Dendritic cell treated with granulocyte-macrophage colony-stimulating factor and Interleukin-4, amounts not matched to agents 40 ng/mL and 50 ng/mL, for 4 days (primary cell): ENCODE measurements at regions of chr3 and their contacts with region 1.

Region 1: DNA sequence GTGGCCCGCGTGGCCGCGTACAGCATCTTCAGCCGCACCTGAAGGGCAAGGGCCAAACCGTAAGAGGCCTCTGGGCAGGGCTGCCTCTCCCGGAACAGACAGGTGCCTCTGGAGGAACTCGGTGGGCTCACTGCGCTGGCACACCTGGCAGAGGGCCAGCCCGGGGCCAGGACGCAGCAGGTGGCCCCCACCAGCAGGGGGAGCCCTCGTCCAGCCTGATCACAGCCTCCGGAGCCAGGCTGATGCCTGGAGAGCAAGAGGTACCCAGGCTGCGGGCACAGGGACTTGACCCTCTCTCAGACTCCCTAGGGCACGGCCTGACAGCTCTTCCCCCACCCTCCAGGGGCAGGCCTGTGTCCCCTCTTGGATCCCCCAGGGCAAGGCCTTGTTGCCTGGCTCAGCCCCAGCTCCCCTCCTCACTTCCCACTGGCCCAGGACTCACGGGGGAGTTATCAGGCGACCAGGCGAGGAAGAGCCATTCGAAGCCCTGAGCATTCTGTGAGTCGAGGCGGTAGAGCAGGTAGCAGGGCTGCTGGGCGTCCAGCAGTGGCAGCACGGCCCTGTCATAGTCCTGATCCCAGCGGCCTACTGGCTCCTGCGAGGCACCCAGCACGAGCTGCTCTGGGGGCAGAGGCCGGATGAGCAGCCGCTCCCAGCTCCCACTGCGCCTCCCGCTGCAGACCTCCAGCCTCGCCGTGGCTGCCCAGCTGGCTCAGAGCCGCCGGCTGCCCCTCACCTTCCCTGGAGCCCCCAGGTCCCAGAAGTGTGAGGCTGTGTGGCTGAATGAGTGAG is 6.3 kb upstream of the TLR9 start:
- H3K4me3 Mint-ChIP-seq: no peak overlapping the region
- H3K27ac Mint-ChIP-seq: peak overlapping the region; percentile 3
- H3K4me1 Mint-ChIP-seq: peaks cover 73% of the 10 kb centered on the region
- H3K27me3 Mint-ChIP-seq: no peaks in the 10 kb centered on the region

Region 2: DNA sequence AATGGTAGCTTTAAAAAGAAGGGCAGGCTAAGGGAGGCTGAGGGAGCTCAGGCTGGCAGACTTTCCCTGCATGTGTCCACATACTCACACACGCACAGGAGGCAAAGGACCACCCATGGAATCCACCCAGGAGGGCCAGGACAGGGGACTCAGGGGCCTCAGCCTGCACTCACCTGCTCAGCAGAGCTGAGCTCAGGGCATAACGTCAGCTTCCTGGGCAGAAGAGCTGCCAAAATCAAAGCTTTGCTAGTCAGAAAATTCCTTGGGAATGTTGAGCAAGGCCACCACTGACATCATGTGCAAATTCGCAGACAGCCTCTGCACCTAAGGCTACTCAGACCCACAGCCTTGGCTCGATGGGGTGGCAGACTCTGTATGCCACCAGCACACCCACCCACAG is 50.2 kb before region 1 on chr3:
- intact Hi-C with region 1: no loop called
- H3K4me3 Mint-ChIP-seq: no peak overlapping the region
- H3K27ac Mint-ChIP-seq: no peak overlapping the region
- H3K4me1 Mint-ChIP-seq: peaks cover 54% of the 10 kb centered on the region
- H3K27me3 Mint-ChIP-seq: peaks cover 3% of the 10 kb centered on the region

Region 3: DNA sequence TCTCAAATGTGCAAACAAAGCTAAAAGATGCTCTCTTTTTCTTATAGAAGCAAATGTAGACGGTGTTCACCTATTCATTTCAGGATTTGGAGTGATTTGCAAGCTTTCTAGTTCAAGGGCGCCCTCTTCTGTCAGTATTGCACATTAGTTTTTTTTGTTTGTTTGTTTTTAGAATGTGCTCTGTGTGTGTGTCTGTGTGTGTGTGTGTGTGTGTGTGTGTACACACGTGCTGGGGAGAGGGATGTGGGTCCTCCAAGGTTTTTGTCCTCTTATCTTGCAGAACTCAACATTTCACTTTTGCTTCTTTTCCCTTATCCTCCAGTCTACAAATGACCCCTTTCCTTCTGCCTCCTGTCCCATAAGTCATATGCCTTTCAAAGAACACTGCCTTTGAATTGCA is 107.9 kb after region 1 on chr3:
- intact Hi-C with region 1: loop called (anchors 2 kb)
- H3K4me3 Mint-ChIP-seq: no peak overlapping the region
- H3K27ac Mint-ChIP-seq: no peak overlapping the region
- H3K4me1 Mint-ChIP-seq: peaks cover 18% of the 10 kb centered on the region
- H3K27me3 Mint-ChIP-seq: no peaks in the 10 kb centered on the region